Heart left ventricle (tissue), 16 donors: ENCODE measurements at regions of chr10 and their contacts with region 1.

Region 1: DNA sequence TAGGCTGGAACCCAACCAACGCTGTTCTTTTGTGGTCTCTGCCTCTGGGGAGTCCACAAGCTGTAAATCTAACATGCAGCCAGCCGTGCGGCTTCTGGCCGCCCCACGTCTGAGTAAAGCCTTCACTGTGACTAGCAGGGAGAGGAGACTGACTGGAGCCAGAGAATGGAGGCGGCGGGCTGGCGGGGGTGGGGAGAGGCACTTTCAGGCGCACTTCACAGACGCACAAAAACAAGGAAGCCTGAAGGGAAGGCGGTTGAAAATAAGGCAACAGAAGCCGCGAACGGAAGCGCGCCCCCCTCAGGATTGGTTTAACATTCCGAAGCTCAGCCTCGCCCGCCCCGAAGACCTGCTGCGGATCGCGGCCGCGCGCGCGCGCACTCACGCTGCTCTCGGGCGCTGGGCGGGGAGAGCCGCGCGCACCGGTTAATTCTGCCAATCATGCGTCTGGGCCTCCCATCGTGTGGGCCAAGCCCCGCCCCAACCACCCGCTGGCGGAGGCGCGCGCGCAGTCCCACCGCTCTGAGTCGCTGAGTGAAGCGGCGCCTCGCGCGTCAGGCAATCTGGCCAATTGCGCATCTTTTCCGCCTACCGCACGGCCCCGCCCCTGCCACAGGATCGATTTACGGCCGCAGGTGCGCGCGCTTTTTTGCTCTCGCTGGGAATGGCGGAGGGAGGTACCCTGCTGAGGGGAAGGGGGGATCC is at the start of gene SFR1:
- DNase-seq: peak; percentile 98 to 99 (median 99)
- ATAC-seq: peak; percentile 96 to 99 (median 96)
- H3K4me3 ChIP-seq: peak within 1 kb of the TSS; percentile 47 to 87 (median 76)
- H3K27ac ChIP-seq: peak within 1 kb of the TSS; percentile 91 to 99 (median 97)
- H3K4me1 ChIP-seq: peaks cover 0 to 28% (median 9%) of the 10 kb centered on the region in 12 donors
- H3K27me3 ChIP-seq: no peaks in the 10 kb centered on the region
- CTCF ChIP-seq: peak; percentile 39 to 84 (median 64)
- POLR2A ChIP-seq: peak; percentile 43 to 90
- total RNA-seq, gene SFR1: 5.4 to 10.1 (median 7.6) TPM

Region 2: DNA sequence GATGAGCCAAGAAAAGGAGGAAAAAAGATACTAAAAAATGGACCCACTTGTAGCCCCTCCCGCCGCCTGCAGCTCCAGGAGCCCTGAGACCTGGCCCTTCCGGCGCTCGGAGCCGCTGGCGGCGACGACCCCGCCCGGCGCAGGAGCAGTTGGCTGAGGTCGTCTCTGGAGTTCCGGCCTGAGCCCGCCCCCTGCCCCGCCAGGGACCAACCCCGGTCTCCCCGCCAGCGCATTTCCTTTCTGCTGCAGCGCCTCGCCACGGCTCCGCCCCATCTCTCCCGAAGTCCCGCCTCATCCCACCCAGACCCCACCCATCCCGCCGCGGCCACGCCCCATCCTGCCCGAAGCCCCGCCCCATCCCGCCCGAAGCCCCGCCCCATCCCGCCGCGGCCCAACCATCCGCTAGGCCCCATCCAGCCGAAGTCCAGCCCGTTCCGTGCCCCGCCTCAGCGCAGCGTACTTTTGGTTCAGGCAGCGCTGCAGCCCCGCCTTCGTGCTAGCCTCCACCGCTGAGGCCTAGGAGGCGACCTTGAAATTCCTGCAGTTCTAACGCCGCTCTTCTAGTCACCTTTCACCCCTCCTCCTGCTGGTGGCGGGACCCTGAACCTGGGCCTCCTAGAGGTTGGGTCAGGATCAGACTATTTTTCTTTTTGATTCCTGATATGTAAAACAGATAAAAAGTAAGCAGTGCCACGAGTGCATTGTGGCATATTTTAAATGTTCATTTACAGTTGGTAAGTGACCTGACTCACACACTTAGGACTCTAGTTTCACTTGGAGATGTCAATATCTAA is 203.4 kb before region 1 on chr10 and contains the start of gene STN1:
- intact Hi-C with region 1: loop called in 5 of 10 experiments (anchors 1 to 10 kb)
- DNase-seq: peak; percentile 98 to 99 (median 99)
- ATAC-seq: peak; percentile 98
- H3K4me3 ChIP-seq: peak within 1 kb of the TSS; percentile 27 to 97 (median 74)
- H3K27ac ChIP-seq: peak within 1 kb of the TSS; percentile 90 to 100 (median 96)
- H3K4me1 ChIP-seq: peaks cover 0 to 44% (median 29%) of the 10 kb centered on the region in 12 donors
- H3K27me3 ChIP-seq: no peaks in the 10 kb centered on the region
- CTCF ChIP-seq: peak in 4 of 12 donors; percentile 11 to 19 (median 14)
- POLR2A ChIP-seq: peak; percentile 85 to 97
- total RNA-seq, gene STN1: 28.6 to 53.1 (median 32.7) TPM

Region 3: GRCh38 chr10:104028146-104028545 is 93.5 kb before region 1 on chr10:
- intact Hi-C with region 1: loop called in 4 of 10 experiments (anchors 2 to 5 kb)
- DNase-seq: peak in 2 of 5 donors; percentile 46 to 53
- ATAC-seq: peak; percentile 78 to 87 (median 86)
- H3K4me3 ChIP-seq: no peak overlapping the region
- H3K27ac ChIP-seq: peak overlapping the region; percentile 10 to 86 (median 78)
- H3K4me1 ChIP-seq: peaks cover 0 to 27% (median 18%) of the 10 kb centered on the region in 12 donors
- H3K27me3 ChIP-seq: no peaks in the 10 kb centered on the region
- CTCF ChIP-seq: peak in 11 of 12 donors; percentile 31 to 65 (median 45)
- POLR2A ChIP-seq: no peak

Region 4: DNA sequence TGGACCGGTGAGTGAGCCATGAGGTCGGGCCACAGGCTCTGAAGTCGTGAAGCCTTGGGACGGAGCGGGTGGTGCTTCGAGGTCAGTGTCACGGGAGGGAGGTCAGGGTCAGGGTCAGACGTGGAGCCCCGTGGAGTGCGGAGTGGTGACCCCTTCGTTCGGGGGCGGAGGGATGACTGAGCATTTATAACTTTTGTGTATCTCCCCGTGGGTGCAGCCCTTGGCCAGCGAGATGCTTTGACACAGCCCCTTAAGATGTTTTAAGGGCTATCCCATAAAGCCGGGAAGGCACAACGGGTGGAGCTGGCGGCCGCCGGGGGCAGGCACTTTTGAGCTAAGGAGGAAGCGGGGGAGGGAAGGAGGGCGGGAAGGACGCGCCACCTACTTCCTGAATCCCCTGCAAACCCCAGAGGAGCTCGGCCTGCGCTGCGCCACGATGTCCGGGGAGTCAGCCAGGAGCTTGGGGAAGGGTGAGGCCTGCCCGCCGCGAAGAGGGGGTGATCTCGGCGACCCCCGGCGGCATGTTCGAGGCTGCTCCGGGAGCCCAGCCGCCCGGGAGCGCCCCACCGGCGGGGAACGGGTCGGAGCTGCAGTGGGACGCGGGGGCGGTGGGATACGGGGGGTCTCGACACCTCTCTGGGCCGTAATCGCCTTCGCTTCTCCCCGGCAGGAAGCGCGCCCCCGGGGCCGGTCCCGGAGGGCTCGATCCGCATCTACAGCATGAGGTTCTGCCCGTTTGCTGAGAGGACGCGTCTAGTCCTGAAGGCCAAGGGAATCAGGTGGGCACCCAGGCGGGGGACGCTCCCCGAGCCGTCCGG is 133.0 kb after region 1 on chr10 and contains the start of gene GSTO1:
- intact Hi-C with region 1: loop called in 2 of 10 experiments (anchors 5 to 10 kb)
- DNase-seq: peak; percentile 87 to 92 (median 89)
- ATAC-seq: peak; percentile 82 to 93 (median 91)
- H3K4me3 ChIP-seq: peak within 1 kb of the TSS; percentile 76 to 98 (median 86)
- H3K27ac ChIP-seq: peak within 1 kb of the TSS; percentile 96 to 100 (median 98)
- H3K4me1 ChIP-seq: peaks cover 3 to 50% (median 33%) of the 10 kb centered on the region in 12 donors
- H3K27me3 ChIP-seq: no peaks in the 10 kb centered on the region
- CTCF ChIP-seq: peak in 2 of 12 donors; percentile 2 to 10
- POLR2A ChIP-seq: peak in 1 of 2 donors; percentile 77
- total RNA-seq, gene GSTO1: 194 to 372 (median 209) TPM

Region 5: GRCh38 chr10:104403636-104404035 is 282.0 kb after region 1 on chr10:
- intact Hi-C with region 1: no loop called
- DNase-seq: no peak
- ATAC-seq: no peak
- H3K4me3 ChIP-seq: no peak overlapping the region
- H3K27ac ChIP-seq: no peak overlapping the region
- H3K4me1 ChIP-seq: no peaks in the 10 kb centered on the region
- H3K27me3 ChIP-seq: no peaks in the 10 kb centered on the region
- CTCF ChIP-seq: no peak
- POLR2A ChIP-seq: no peak

Region 6: DNA sequence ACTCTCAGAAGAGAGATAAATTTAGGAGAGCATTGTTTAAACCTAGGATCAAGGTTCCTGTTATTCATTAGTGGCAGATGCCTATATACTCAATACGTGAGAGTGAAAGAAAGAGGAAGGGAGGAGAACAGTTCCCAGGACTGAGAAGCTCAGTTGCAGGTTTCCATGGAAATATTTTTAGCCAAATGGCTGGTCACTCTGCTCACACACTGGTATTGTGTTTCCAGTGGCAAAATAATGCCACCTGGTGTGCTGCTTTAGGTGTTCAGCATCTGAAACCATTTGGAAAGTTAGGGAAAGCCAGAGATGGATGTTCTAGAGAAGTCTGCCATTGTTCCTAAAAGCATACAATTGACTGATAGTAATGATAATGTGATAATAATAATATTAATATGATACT is 1347.1 kb after region 1 on chr10:
- intact Hi-C with region 1: no loop called
- DNase-seq: no peak
- ATAC-seq: no peak
- H3K4me3 ChIP-seq: no peak overlapping the region
- H3K27ac ChIP-seq: no peak overlapping the region
- H3K4me1 ChIP-seq: no peaks in the 10 kb centered on the region
- H3K27me3 ChIP-seq: no peaks in the 10 kb centered on the region
- CTCF ChIP-seq: no peak
- POLR2A ChIP-seq: no peak